ENCODE measurements at regions of chr1 and their contacts with region 1.

Region 1: DNA sequence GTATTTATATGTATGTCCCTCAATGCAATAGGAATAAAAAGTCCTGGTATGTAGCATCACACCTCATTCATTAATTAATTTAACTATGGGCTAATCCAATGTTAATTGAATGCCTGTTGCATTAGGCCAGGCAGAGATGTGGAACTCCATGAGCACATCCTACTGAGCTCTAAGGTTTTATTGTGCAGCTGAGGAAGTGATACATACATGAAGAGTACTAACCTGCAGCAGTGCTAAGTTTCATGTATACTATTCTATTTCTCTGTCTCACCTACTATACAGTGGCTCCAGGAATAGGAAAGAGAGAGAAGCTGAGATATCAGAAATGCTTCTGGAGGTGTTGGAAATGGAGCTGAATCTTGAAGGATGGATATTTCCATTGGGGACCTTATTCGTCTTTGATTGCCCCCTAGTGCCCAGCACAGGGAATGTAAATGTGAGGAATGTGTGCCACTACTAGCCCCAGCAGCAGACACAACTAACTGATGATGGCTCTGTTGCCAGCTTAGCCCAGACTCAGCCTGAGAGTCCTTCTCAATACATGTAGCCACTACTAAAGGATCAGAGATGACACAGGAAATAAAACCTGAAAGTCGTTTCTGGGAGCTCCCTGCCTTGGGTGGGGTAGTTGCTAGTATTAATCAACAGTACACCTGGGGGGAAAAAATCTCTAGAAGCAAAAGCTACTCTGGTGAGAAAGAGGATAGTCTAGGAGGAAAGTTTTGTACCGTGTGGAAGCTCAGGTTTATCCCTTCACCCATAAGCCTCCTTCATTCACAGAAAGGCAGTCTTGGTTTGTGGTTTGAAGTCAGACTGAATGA is 173.3 kb upstream of the FOXD3 start:
- DNase-seq: peak; percentile 79
- H3K4me3 ChIP-seq: no peak overlapping the region
- H3K27ac ChIP-seq: no peak overlapping the region
- H3K4me1 ChIP-seq: no peaks in the 10 kb centered on the region
- H3K27me3 ChIP-seq: no peaks in the 10 kb centered on the region
- CTCF ChIP-seq: peak; percentile 80

Region 2: GRCh38 chr1:62962901-62963776 is 185.9 kb before region 1 on chr1:
- CTCF ChIA-PET with region 1: interaction called, 3 read pairs
- POLR2A ChIA-PET with region 1: no interaction called
- intact Hi-C with region 1: loop called (anchors 10 kb)
- DNase-seq: peak; percentile 87
- H3K4me3 ChIP-seq: no peak overlapping the region
- H3K27ac ChIP-seq: no peak overlapping the region
- H3K4me1 ChIP-seq: peaks cover 17% of the 10 kb centered on the region
- H3K27me3 ChIP-seq: no peaks in the 10 kb centered on the region
- CTCF ChIP-seq: peak; percentile 80

Region 3: DNA sequence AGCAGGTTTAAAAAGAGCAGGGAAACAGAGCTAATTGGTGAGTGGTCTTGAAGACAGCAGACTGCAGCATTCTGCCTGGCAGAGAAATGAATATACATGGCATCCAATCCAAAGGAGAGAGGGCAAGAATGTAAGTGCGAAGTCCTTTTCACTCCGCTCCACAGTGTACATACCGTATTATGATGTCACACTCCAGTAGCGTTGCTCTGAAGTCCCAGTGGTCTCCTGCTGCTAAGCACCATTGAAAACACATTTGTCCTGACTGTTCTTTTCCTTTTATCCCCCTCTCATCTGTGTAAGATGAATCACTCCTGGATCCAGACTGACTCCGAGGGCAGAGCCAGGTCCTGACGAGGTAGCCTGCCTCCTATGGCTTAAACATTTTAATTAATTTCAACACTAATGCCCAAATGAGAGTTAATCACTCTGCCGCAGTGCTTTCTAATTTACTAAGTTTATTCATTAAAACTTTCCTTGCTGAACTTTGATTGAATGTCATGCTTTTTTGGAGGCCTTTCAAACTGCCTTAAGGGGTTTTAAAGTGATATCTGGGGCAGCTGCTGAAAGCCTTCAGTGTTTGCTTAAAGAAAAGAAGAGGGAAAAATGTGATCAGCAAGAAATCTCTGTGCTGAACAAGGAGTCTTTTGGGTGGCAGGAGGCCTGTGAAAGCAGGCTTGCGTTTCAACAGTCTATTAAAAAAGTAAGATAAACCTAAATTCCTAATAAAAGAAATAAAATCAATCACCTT is 137.9 kb before region 1 on chr1:
- CTCF ChIA-PET with region 1: no interaction called
- POLR2A ChIA-PET with region 1: no interaction called
- intact Hi-C with region 1: loop called (anchors 5 kb)
- DNase-seq: peak; percentile 54
- H3K4me3 ChIP-seq: no peak overlapping the region
- H3K27ac ChIP-seq: no peak overlapping the region
- H3K4me1 ChIP-seq: no peaks in the 10 kb centered on the region
- H3K27me3 ChIP-seq: no peaks in the 10 kb centered on the region
- CTCF ChIP-seq: no peak

Region 4: DNA sequence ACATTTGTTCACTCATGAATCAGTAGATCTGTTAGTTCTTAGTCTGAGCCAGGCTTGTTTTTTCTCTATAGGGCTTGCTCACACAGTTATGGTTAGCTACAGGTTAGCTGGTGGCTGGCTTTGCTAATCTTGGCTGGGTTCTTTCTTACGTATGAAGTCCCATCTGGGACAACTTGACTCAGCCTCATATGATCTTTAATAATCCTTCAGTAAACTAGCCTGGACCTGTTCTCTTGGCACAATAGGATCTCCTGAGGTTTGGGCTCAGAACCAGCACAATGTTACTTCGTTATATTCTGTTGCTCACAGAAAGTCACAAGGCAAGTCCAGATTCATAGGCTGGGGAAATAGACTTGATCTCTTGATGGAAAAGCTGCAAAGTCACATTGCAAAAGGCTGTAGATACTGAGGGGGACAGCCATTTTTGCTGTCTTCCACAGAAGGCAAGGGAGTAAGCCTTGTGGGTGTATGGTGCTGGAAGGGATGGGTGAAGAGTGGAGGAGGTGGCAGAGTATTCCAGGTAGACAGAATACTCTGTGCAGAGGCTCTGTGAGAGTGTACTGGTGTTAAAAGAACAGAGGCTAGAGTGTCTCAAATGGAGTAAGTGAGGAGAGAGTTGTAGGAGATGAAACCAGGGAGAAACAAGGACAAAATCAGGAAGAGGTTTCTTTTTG is 398.7 kb after region 1 on chr1:
- CTCF ChIA-PET with region 1: no interaction called
- POLR2A ChIA-PET with region 1: no interaction called
- intact Hi-C with region 1: no loop called
- DNase-seq: no peak
- H3K4me3 ChIP-seq: no peak overlapping the region
- H3K27ac ChIP-seq: no peak overlapping the region
- H3K4me1 ChIP-seq: no peaks in the 10 kb centered on the region
- H3K27me3 ChIP-seq: no peaks in the 10 kb centered on the region
- CTCF ChIP-seq: no peak